Activated naive CD4-positive, alpha-beta T cell treated with anti-CD3 and anti-CD28 coated beads for 36 hours (primary cell): ENCODE measurements at regions of chr5 and their contacts with region 1.

Region 1: GRCh38 chr5:163661360-163661759 is 155.9 kb downstream of the MAT2B start:
- DNase-seq: no peak
- H3K4me3 Mint-ChIP-seq: no peak overlapping the region
- H3K27ac Mint-ChIP-seq: no peak overlapping the region
- H3K4me1 Mint-ChIP-seq: no peaks in the 10 kb centered on the region
- H3K27me3 Mint-ChIP-seq: peaks cover 2% of the 10 kb centered on the region

Region 2: DNA sequence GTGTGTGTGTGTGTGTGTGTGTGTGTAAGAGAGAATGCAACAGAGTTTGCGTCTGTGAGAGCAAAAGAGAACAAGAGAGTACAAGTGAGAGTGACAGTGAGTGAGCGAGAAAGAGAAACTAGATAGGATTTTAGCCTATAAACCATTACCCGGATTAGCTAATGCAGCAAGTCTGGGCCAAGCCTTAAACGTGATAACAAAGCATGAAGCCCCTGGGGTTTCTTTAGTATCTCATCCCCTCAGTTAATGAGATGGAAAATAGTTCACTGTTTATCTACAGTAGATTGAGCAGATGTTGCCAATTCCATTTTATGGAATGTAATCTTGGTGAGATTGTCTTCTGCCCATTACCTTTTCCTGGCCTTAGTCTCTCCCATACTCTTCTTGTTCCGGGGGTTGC is 41.4 kb before region 1 on chr5:
- CTCF ChIA-PET with region 1: no interaction called
- intact Hi-C with region 1: no loop called
- DNase-seq: no peak
- H3K4me3 Mint-ChIP-seq: no peak overlapping the region
- H3K27ac Mint-ChIP-seq: no peak overlapping the region
- H3K4me1 Mint-ChIP-seq: no peaks in the 10 kb centered on the region
- H3K27me3 Mint-ChIP-seq: peaks cover 8% of the 10 kb centered on the region

Region 3: DNA sequence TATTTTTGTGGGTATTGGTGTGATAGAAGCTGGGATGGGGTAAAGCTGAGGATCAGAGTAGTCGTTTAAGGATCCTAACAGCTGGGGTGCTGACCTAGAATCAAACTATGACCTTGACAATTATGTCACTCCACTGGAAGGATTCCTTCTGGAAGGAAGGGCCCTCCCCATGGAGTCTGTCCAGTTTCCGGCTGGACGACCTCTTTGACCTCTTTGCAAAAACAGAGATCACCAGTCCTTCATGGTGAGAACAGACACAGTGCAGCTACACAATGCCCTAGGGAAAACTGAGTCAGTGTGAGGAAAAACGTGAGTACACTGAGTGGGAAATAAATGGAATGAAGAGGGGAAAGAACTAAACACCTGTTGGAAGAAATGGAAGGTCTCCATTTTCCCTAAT is 289.7 kb after region 1 on chr5:
- CTCF ChIA-PET with region 1: no interaction called
- intact Hi-C with region 1: loop called (anchors 5 kb)
- DNase-seq: no peak
- H3K4me3 Mint-ChIP-seq: no peak overlapping the region
- H3K27ac Mint-ChIP-seq: no peak overlapping the region
- H3K4me1 Mint-ChIP-seq: no peaks in the 10 kb centered on the region
- H3K27me3 Mint-ChIP-seq: no peaks in the 10 kb centered on the region